CD8-positive, alpha-beta T cell (primary cell): ENCODE measurements at regions of chr7 and their contacts with region 1.

Region 1: GRCh38 chr7:92020636-92021035 is 80.0 kb downstream of the AKAP9 start:
- DNase-seq: no peak
- ATAC-seq: no peak
- H3K4me3 ChIP-seq: no peak overlapping the region
- H3K4me3 Mint-ChIP-seq: no peak overlapping the region
- H3K27ac ChIP-seq: no peak overlapping the region
- H3K27ac Mint-ChIP-seq: no peak overlapping the region
- H3K4me1 ChIP-seq: no peaks in the 10 kb centered on the region
- H3K4me1 Mint-ChIP-seq: no peaks in the 10 kb centered on the region
- H3K27me3 ChIP-seq: no peaks in the 10 kb centered on the region
- H3K27me3 Mint-ChIP-seq: no peaks in the 10 kb centered on the region
- CTCF ChIP-seq: no peak

Region 2: DNA sequence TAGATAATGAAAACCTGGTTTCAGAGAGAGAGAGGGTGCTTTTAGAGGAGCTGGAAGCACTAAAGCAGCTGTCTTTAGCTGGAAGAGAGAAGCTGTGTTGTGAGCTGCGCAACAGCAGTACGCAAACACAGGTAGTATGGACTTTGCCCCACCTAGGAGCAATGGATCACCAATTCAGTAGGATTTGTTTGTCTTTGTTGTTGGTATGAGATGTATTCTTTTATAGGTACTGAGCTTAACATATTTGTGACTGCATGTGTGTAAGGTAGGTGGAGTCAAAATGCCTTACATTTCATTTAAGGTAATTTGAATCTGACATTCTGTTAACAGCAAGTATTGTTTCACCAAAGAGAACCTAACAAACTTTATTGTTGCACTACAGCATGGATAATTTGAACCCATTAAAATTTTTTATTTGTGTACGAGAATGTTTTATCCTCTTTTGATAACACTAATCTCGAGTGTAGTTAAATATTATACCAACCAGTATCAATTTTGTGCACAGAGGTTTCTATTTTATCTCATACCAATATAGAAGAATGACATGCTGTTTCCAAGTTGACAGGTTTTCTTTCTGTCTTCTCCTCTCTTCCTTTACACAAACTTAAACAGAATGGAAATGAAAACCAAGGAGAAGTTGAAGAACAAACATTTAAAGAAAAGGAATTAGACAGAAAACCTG is 21.6 kb after region 1 on chr7:
- CTCF ChIA-PET with region 1: no interaction called
- POLR2A ChIA-PET with region 1: no interaction called
- intact Hi-C with region 1: loop called in 1 of 2 experiments (anchors 2 kb)
- DNase-seq: no peak
- ATAC-seq: no peak
- H3K4me3 ChIP-seq: no peak overlapping the region
- H3K4me3 Mint-ChIP-seq: no peak overlapping the region
- H3K27ac ChIP-seq: no peak overlapping the region
- H3K27ac Mint-ChIP-seq: no peak overlapping the region
- H3K4me1 ChIP-seq: no peaks in the 10 kb centered on the region
- H3K4me1 Mint-ChIP-seq: no peaks in the 10 kb centered on the region
- H3K27me3 ChIP-seq: no peaks in the 10 kb centered on the region
- H3K27me3 Mint-ChIP-seq: no peaks in the 10 kb centered on the region
- CTCF ChIP-seq: no peak